Activated CD8-positive, alpha-beta T cell treated with anti-CD3 and anti-CD28 coated beads for 36 hours (primary cell): ENCODE measurements at regions of chr12 and their contacts with region 1.

Region 1: DNA sequence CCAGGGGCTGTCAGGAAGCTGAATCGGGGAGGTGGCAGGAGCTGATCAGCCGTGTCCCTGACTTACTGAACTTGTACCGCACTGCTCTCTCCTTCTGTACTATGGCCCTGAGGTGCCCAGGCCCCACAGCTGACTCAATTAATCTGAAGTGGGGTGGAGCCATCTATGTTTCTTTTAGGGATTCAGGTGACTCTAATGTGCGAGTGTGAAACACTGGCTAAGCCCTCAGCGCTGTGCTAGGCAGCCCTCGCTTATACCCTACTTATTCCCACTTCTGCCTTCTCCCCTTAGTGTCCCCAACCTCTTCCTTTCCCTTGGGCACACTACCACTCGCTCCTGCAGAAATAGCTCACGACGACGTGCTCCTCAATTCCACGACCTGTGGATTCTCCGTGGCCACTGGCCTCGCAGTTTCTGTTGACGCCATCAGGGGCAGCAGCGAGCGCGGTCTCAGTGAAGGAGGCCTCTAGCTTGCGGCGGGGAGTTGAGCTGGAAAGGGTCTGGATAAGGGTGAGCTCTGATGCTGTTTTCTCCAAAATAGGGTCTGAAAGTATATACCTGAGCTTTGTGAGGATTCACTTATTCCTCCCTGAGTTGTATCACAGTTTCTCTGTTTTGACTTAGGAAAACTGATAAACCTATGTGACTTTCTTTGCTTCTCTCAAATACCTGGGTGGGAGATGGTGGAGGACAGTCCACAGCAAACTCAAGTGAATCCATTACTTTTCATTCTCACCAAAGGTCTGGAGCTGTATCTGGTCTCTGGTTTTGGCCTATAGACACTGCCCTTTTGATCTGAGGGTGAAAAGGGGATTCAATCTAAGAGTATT is 167.6 kb downstream of the SLC41A2 start:
- DNase-seq: peak; percentile 59
- ATAC-seq: peak; percentile 64
- H3K4me3 Mint-ChIP-seq: no peak overlapping the region
- H3K27ac Mint-ChIP-seq: no peak overlapping the region
- H3K4me1 Mint-ChIP-seq: no peaks in the 10 kb centered on the region
- H3K27me3 Mint-ChIP-seq: no peaks in the 10 kb centered on the region
- CTCF ChIP-seq: peak; percentile 86

Region 2: DNA sequence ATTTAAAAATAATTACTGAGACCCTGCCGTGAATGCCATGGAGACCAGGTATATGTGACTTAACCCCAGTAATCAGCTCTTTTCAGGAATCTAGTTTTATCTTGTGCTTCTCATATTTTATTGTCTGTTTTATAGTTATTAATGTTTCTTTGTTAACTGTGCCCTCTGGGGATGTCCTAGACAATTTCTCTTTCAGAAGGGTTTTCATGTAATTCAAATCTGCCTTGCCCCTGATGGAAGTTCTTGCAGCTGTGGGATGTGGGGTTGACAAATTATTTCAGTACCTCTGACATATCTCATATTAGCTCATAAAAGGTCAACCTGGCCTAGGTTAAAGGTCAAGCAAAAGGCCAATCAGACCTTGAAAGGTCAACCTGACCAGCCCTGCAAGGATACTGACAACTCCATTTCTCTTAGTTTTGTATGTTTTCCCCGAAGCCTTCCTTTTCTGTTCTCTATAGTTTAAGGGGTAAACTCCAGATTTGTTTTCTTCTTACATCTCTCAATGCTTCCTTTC is 14.7 kb before region 1 on chr12:
- CTCF ChIA-PET with region 1: interaction called, 13 read pairs
- POLR2A ChIA-PET with region 1: no interaction called
- intact Hi-C with region 1: no loop called
- DNase-seq: no peak
- ATAC-seq: no peak
- H3K4me3 Mint-ChIP-seq: no peak overlapping the region
- H3K27ac Mint-ChIP-seq: no peak overlapping the region
- H3K4me1 Mint-ChIP-seq: no peaks in the 10 kb centered on the region
- H3K27me3 Mint-ChIP-seq: no peaks in the 10 kb centered on the region
- CTCF ChIP-seq: no peak

Region 3: GRCh38 chr12:104805186-104805585 is 14.7 kb after region 1 on chr12:
- CTCF ChIA-PET with region 1: interaction called, 15 read pairs
- POLR2A ChIA-PET with region 1: no interaction called
- intact Hi-C with region 1: no loop called
- DNase-seq: no peak
- ATAC-seq: no peak
- H3K4me3 Mint-ChIP-seq: no peak overlapping the region
- H3K27ac Mint-ChIP-seq: no peak overlapping the region
- H3K4me1 Mint-ChIP-seq: no peaks in the 10 kb centered on the region
- H3K27me3 Mint-ChIP-seq: no peaks in the 10 kb centered on the region
- CTCF ChIP-seq: no peak

Region 4: GRCh38 chr12:104998423-104999346 is 208.2 kb after region 1 on chr12:
- CTCF ChIA-PET with region 1: no interaction called
- POLR2A ChIA-PET with region 1: no interaction called
- intact Hi-C with region 1: no loop called
- DNase-seq: no peak
- ATAC-seq: no peak
- H3K4me3 Mint-ChIP-seq: no peak overlapping the region
- H3K27ac Mint-ChIP-seq: no peak overlapping the region
- H3K4me1 Mint-ChIP-seq: peaks cover 25% of the 10 kb centered on the region
- H3K27me3 Mint-ChIP-seq: no peaks in the 10 kb centered on the region
- CTCF ChIP-seq: no peak